ENCODE measurements at regions of chr10 and their contacts with region 1.

Region 1: GRCh38 chr10:35598384-35598783 is 6.8 kb upstream of the GJD4 start:
- DNase-seq: no peak
- ATAC-seq: no peak
- H3K4me3 ChIP-seq: no peak overlapping the region
- H3K27ac ChIP-seq: no peak overlapping the region
- H3K4me1 ChIP-seq: no peaks in the 10 kb centered on the region
- H3K27me3 ChIP-seq: peaks cover 0 to 4% (median 0%) of the 10 kb centered on the region in 9 donors
- CTCF ChIP-seq: peak; percentile 18 to 61 (median 41)
- POLR2A ChIP-seq: no peak

Region 2: DNA sequence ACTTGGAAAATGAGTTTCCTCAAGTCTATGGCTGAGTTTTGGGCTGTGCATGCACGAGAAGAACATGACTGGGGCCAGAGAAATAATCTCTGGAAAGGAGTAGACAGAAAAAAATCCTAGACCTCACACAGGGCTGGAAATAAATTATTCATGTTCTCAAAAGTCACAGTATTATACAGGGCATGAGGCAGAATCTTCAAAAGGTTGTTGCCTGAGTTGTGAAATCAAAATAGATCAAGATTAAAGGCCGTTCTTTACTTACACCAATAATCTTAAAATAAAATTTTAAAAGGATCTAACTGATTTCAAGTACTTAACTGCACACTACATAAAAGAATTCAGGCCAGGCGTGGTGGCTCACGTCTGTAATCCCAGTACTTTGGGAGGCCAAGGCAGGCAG is 485.8 kb before region 1 on chr10:
- intact Hi-C with region 1: loop called in 1 of 10 experiments (anchors 10 kb)
- DNase-seq: no peak
- ATAC-seq: no peak
- H3K4me3 ChIP-seq: no peak overlapping the region
- H3K27ac ChIP-seq: no peak overlapping the region
- H3K4me1 ChIP-seq: no peaks in the 10 kb centered on the region
- H3K27me3 ChIP-seq: no peaks in the 10 kb centered on the region
- CTCF ChIP-seq: no peak
- POLR2A ChIP-seq: no peak

Region 3: DNA sequence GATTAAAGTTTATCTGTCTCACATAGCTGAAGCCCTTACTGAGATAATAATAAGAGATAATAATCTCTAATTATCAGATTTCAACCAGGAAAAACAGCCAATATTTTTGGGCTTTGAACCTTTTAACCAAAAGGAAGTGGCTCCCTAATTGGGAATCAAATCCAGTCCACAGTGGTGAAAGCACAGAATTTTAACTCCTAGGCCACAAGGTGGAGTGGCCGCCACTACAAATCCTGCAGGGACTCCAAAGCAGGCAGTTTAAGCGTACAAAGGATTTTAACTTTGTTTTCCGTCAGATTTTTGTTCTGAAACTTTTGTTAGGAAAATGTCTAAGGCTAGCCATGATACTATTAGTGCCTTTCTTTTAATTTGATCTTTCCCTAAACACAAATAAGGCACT is 361.6 kb before region 1 on chr10:
- intact Hi-C with region 1: loop called in 8 of 10 experiments (anchors 2 to 10 kb)
- DNase-seq: no peak
- ATAC-seq: no peak
- H3K4me3 ChIP-seq: no peak overlapping the region
- H3K27ac ChIP-seq: no peak overlapping the region
- H3K4me1 ChIP-seq: no peaks in the 10 kb centered on the region
- H3K27me3 ChIP-seq: no peaks in the 10 kb centered on the region
- CTCF ChIP-seq: peak in 10 of 12 donors; percentile 19 to 50 (median 38)
- POLR2A ChIP-seq: no peak

Region 4: GRCh38 chr10:35246770-35247343 is 351.5 kb before region 1 on chr10:
- intact Hi-C with region 1: loop called in 5 of 10 experiments (anchors 5 to 10 kb)
- DNase-seq: no peak
- ATAC-seq: no peak
- H3K4me3 ChIP-seq: no peak overlapping the region
- H3K27ac ChIP-seq: no peak overlapping the region
- H3K4me1 ChIP-seq: no peaks in the 10 kb centered on the region
- H3K27me3 ChIP-seq: no peaks in the 10 kb centered on the region
- CTCF ChIP-seq: no peak
- POLR2A ChIP-seq: no peak

Region 5: GRCh38 chr10:35626971-35627507 is 28.7 kb after region 1 on chr10:
- intact Hi-C with region 1: no loop called
- DNase-seq: no peak
- ATAC-seq: no peak
- H3K4me3 ChIP-seq: no peak overlapping the region
- H3K27ac ChIP-seq: no peak overlapping the region
- H3K4me1 ChIP-seq: no peaks in the 10 kb centered on the region
- H3K27me3 ChIP-seq: no peaks in the 10 kb centered on the region
- CTCF ChIP-seq: no peak
- POLR2A ChIP-seq: no peak

Measured in heart left ventricle (tissue), 16 donors.